Dendritic cell treated with granulocyte-macrophage colony-stimulating factor and Interleukin-4, amounts not matched to agents 40 ng/mL and 50 ng/mL, for 4 days (primary cell): ENCODE measurements at regions of chr18 and their contacts with region 1.

Region 1: DNA sequence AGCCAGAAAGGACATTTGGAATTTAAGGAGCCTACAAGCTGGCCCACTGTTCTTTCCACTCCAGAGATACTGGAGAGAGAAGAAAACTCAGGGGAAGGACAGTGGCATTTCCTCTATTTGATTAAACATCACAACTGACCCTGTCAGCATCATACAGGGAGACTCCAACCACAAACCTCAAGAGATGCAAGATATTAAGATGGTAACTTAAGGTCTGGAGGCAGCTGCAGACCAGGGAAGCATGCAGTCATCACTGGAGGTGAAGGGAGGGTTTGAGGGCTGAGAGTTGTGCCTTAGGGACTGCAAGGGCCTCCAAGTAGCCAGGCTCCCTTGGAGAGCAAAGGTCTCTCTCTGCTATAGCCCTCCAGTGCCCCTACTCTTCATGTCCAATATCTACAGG is 67.4 kb downstream of the RNF152 start:
- H3K4me3 Mint-ChIP-seq: no peak overlapping the region
- H3K27ac Mint-ChIP-seq: no peak overlapping the region
- H3K4me1 Mint-ChIP-seq: no peaks in the 10 kb centered on the region
- H3K27me3 Mint-ChIP-seq: peaks cover 66% of the 10 kb centered on the region

Region 2: GRCh38 chr18:61727241-61728193 is 97.9 kb before region 1 on chr18:
- intact Hi-C with region 1: loop called (anchors 10 kb)
- H3K4me3 Mint-ChIP-seq: no peak overlapping the region
- H3K27ac Mint-ChIP-seq: no peak overlapping the region
- H3K4me1 Mint-ChIP-seq: peaks cover 7% of the 10 kb centered on the region
- H3K27me3 Mint-ChIP-seq: peaks cover 31% of the 10 kb centered on the region

Region 3: DNA sequence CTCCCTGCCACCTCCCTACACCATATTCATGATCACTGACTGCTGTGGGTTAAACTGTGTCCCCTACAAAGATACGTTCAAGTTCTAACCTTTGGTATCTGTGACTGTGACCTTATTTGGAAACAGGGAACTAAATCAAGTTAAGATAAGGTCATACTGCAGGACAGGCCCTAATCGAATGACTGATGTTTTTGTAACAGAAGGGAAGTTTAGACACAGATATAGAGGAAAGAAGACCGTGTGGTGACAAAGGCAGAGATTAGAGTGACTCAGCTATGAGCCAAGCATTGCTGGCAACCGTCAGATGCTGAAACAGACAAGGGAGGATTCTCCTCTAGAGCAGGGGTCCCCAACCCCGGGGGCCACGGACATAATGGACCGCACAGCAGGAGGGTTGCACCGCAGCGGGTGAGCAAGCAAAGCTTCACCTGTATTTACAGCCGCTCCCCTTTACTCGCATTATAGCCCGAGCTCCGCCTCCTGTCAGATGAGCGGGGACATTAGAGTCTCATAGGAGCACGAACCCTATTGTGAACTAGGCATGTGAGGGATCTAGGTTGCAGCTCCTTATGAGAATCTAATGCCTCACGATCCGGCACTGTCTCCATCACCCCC is 96.3 kb after region 1 on chr18:
- intact Hi-C with region 1: no loop called
- H3K4me3 Mint-ChIP-seq: no peak overlapping the region
- H3K27ac Mint-ChIP-seq: no peak overlapping the region
- H3K4me1 Mint-ChIP-seq: no peaks in the 10 kb centered on the region
- H3K27me3 Mint-ChIP-seq: peaks cover 11% of the 10 kb centered on the region